Lower leg skin (tissue), 4 donors: ENCODE measurements at regions of chr1 and their contacts with region 1.

Region 1: GRCh38 chr1:5637171-5637570 is 355.1 kb downstream of the NPHP4 start:
- DNase-seq: peak in 1 of 2 donors; percentile 86
- H3K4me3 ChIP-seq: no peak overlapping the region
- CTCF ChIP-seq: no peak
- POLR2A ChIP-seq: no peak

Region 2: DNA sequence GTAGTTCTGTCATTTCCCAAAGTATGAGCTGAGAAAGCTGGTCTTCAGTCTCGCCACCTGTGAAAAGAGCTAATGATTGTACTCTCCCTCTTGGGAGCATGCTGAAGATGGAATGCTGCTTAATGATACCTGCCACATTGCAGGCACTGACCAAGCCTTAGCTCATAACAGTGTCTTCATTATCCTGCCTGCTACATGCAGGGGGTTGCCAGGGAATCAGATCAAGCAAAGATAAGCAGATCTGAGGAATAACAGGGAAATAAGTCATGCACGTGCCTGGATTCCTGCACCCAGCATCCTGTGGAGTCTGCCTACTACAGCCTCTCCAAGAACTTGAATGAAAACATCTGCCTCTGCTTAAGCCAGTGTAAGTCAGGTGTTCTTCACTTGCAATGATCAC is 312.3 kb before region 1 on chr1:
- intact Hi-C with region 1: no loop called
- DNase-seq: no peak
- H3K4me3 ChIP-seq: no peak overlapping the region
- CTCF ChIP-seq: no peak
- POLR2A ChIP-seq: no peak

Region 3: GRCh38 chr1:5514519-5515183 is 122.5 kb before region 1 on chr1:
- intact Hi-C with region 1: no loop called
- DNase-seq: peak in 1 of 2 donors; percentile 92
- H3K4me3 ChIP-seq: no peak overlapping the region
- CTCF ChIP-seq: peak in 1 of 3 donors; percentile 79
- POLR2A ChIP-seq: no peak

Region 4: DNA sequence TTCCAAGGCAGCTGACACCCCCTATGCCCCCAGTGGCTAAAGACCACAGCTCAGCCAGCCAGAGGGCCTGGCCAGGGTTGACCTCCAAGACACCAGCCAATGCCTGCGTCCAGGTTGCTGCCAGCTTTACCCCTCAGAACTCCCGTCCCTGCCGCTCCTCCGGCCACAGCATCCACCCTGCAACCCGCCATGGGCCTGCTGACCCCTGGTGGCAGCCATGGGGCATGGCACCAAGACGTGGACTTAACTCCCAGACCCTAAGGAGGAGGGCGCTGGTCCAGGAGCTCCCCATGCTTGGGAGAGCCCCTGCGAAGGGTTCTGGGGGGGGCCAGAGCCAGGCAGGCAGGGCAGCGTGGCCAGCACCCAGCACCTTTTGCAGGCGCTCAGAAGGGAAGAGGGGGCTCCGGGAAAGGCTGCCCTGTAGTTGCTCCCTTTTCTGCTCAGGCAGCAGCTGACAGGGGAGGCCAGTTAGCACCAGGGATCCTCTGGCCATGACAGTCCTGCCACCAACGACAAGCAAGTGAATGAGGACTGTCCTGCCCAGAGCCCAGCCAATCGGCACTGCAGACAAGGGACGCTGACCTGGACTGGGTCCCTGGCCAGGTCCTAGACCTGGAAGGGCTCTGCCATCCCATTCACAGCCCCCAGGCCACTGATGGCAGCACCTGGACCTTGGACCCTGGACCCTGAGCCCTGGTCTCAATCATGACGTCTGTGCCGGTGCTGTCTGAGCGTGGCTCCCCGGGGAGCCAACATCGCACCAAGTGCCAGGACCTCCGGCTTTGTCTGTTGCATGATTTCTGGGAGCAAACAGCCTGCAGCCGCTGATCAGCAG is 108.8 kb after region 1 on chr1:
- intact Hi-C with region 1: loop called (anchors 5 kb)
- DNase-seq: peak in 1 of 2 donors; percentile 55
- H3K4me3 ChIP-seq: no peak overlapping the region
- CTCF ChIP-seq: peak in 1 of 3 donors; percentile 39
- POLR2A ChIP-seq: no peak

Region 5: GRCh38 chr1:5915587-5916571 is 278.7 kb after region 1 on chr1:
- intact Hi-C with region 1: loop called (anchors 10 kb)
- DNase-seq: no peak
- H3K4me3 ChIP-seq: no peak overlapping the region
- CTCF ChIP-seq: peak in 1 of 3 donors; percentile 18
- POLR2A ChIP-seq: no peak